ENCODE measurements at regions of chr9 and their contacts with region 1.

Region 1: GRCh38 chr9:130712564-130713285 is 19.1 kb downstream of the EXOSC2 start:
- DNase-seq: peak; percentile 89 to 97 (median 92)
- ATAC-seq: peak; percentile 97
- H3K4me3 ChIP-seq: peak overlapping the region; percentile 97
- H3K4me3 Mint-ChIP-seq: peak overlapping the region; percentile 93
- H3K27ac ChIP-seq: peak overlapping the region; percentile 86 to 95
- H3K27ac Mint-ChIP-seq: peak overlapping the region; percentile 87
- H3K4me1 ChIP-seq: peaks cover 29% of the 10 kb centered on the region
- H3K4me1 Mint-ChIP-seq: peaks cover 35% of the 10 kb centered on the region
- H3K27me3 ChIP-seq: no peaks in the 10 kb centered on the region
- H3K27me3 Mint-ChIP-seq: no peaks in the 10 kb centered on the region
- CTCF ChIP-seq: no peak

Region 2: GRCh38 chr9:130578865-130579737 is 133.6 kb before region 1 on chr9 and contains the start of gene FUBP3:
- CTCF ChIA-PET with region 1: no interaction called
- POLR2A ChIA-PET with region 1: no interaction called
- intact Hi-C with region 1: loop called in 1 of 2 experiments (anchors 5 kb)
- DNase-seq: peak; percentile 63 to 93 (median 86)
- ATAC-seq: peak; percentile 72
- H3K4me3 ChIP-seq: peak within 1 kb of the TSS; percentile 97
- H3K4me3 Mint-ChIP-seq: peak within 1 kb of the TSS; percentile 88
- H3K27ac ChIP-seq: peak within 1 kb of the TSS; percentile 77 to 87
- H3K27ac Mint-ChIP-seq: peak within 1 kb of the TSS; percentile 80
- H3K4me1 ChIP-seq: peaks cover 26% of the 10 kb centered on the region
- H3K4me1 Mint-ChIP-seq: peaks cover 60% of the 10 kb centered on the region
- H3K27me3 ChIP-seq: no peaks in the 10 kb centered on the region
- H3K27me3 Mint-ChIP-seq: no peaks in the 10 kb centered on the region
- CTCF ChIP-seq: no peak
- total RNA-seq, gene FUBP3: 21.2 to 30.2 TPM

Measured in CD4-positive, alpha-beta T cell (primary cell).